Dorsolateral prefrontal cortex (tissue), 120 donors: ENCODE measurements at regions of chr11 and their contacts with region 1.

Region 1: GRCh38 chr11:120303004-120303637 is 22.0 kb upstream of the TLCD5 start:
- DNase-seq: peak in 7 of 10 donors; percentile 37 to 65 (median 56)
- H3K4me3 ChIP-seq: no peak overlapping the region
- H3K27ac ChIP-seq: no peak overlapping the region
- H3K27me3 ChIP-seq: peaks cover 0 to 7% (median 0%) of the 10 kb centered on the region in 45 donors
- CTCF ChIP-seq: peak; percentile 35 to 91 (median 83)

Region 2: GRCh38 chr11:120172054-120172911 is 130.8 kb before region 1 on chr11:
- intact Hi-C with region 1: loop called (anchors 2 kb)
- DNase-seq: peak in 9 of 10 donors; percentile 55 to 80 (median 72)
- H3K4me3 ChIP-seq: peak overlapping the region in 3 of 59 donors; percentile 11 to 26 (median 11)
- H3K27ac ChIP-seq: no peak overlapping the region
- H3K27me3 ChIP-seq: peaks cover 0 to 5% (median 0%) of the 10 kb centered on the region in 45 donors
- CTCF ChIP-seq: peak; percentile 69 to 98 (median 92)

Region 3: DNA sequence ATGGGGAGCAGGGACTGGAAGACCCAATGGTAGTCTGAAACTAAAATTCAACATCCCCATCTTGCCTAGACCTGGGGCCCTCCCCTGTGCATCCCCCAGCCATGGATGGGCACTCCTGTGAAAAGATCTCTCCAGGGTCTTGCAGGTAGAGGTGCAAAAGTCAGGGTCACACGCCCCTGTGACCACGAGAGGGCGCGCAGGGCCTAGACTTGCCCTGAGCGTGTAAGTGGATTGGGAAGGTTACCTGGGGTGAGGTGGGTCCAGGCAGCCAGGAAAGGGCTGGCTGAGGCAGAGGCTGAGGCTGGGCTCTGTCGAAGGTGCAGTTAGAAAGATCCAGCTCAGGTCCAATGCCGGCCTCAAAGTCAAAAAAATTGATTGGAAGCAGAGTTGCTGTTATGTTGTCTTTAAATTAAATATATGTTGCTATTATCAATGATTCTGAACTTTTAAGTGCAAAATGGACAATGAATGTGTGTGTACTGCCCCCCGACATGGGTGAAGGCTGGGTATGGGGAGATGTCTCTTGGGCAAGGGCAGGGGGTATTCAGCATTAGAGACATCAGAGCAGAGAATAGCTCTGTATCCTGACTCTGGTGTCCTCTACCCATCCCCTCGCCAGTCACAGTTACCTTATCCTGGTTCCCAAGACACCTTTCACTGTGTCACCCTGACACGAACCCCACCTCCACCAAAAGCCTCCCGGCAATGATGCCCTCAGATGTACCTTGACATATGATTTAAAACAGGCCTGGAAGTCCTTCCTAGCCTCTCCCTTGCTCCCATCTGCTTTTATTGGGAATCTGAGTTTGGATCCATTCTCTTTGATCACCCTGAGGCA is 67.9 kb before region 1 on chr11:
- intact Hi-C with region 1: loop called (anchors 2 to 5 kb)
- DNase-seq: peak in 1 of 10 donors; percentile 18
- H3K4me3 ChIP-seq: no peak overlapping the region
- H3K27ac ChIP-seq: no peak overlapping the region
- H3K27me3 ChIP-seq: peaks cover 0 to 21% (median 11%) of the 10 kb centered on the region in 45 donors
- CTCF ChIP-seq: peak in 55 of 56 donors; percentile 14 to 77 (median 49)